AG04450 (cell line): ENCODE measurements at regions of chr19 and their contacts with region 1.

Region 1: DNA sequence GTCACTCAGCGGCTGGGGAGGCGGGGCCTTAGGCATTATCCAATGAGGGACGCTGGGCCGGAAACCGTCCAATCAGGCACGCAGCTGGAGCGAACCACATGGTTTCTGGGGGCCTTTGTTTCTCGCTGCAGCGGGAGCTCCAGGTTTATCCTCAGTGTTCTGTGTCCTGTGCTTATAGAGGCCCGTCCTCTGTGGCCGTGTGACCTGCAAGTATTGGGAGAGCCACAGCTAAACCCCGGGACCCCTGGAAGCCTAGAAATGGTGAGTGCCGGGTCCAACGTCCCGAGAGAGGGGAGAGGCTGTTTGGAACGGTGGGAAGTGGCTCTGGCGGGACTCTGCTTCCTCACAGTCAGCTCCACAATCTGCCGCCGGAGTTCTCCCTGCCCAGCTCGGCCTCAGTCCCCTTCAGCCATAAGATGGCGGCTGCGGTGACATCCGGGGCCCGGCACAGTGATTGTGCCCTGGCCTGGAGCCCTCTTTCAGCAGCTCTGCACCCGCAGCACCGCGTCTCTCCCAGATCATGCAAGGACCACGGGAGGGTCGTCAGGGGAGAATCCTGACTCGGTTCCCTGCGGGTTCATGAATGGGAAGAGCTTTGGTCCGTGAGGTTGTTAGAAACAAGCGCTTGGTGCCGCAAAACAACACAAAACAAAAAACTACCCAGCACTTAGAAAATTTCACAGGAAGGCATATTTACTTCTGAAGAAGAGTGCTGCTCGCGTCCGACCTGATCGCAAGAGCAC is at the start of gene ZNF253:
- DNase-seq: peak; percentile 65
- H3K4me3 ChIP-seq: peak within 1 kb of the TSS; percentile 83
- H3K27ac ChIP-seq: peak within 1 kb of the TSS; percentile 92
- H3K27me3 ChIP-seq: no peaks in the 10 kb centered on the region
- CTCF ChIP-seq: no peak
- polyA plus RNA-seq, gene ZNF253: 2.8 and 4.2 TPM in 2 replicates

Region 2: GRCh38 chr19:19776041-19777008 is 89.6 kb before region 1 on chr19:
- CTCF ChIA-PET with region 1: no interaction called
- POLR2A ChIA-PET with region 1: interaction called, 10 read pairs
- DNase-seq: peak; percentile 97
- H3K4me3 ChIP-seq: peak overlapping the region; percentile 95
- H3K27ac ChIP-seq: peak overlapping the region; percentile 47
- H3K27me3 ChIP-seq: no peaks in the 10 kb centered on the region
- CTCF ChIP-seq: no peak

Region 3: GRCh38 chr19:19821366-19821951 is 44.5 kb before region 1 on chr19 and contains the start of gene ZNF506:
- CTCF ChIA-PET with region 1: no interaction called
- POLR2A ChIA-PET with region 1: interaction called, 20 read pairs
- DNase-seq: peak; percentile 91
- H3K4me3 ChIP-seq: peak within 1 kb of the TSS; percentile 82
- H3K27ac ChIP-seq: peak within 1 kb of the TSS; percentile 99
- H3K27me3 ChIP-seq: no peaks in the 10 kb centered on the region
- CTCF ChIP-seq: no peak
- polyA plus RNA-seq, gene ZNF506: 10.4 and 14.2 TPM in 2 replicates

Region 4: DNA sequence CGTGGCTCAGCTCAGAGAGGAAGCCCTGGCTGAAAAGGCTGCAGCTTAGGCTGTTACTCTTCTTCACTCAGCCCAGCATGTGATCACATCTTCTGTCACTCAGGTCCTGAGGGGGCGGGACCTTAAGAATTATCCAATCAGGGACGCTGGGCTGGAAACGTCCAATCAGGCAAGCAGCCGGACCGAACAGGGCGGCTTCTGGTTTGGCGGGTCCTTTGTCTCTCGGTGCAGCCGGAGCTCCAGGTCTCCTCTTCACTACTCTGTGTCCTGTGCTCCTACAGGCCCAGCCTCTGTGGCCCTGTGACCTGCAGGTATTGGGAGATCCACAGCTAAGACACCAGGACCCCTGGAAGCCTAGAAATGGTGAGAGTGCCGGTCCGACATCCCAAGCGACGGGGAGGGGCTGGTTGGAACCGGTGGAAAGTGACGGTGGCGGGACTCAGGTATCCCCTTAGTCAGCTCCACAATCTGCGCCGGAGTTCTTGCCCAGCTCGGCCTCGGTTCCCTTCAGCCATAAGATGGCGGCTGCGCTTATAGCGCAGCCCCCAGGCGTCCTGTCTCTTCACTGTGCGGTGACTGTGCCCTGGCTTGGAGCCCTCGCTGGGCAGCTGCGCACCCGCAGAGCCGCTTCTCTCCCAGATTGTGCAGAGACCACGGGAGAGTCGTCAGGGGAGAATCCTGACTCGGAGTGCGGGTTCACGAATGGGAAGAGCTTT is 35.0 kb after region 1 on chr19 and contains the start of gene ZNF93:
- CTCF ChIA-PET with region 1: no interaction called
- POLR2A ChIA-PET with region 1: interaction called, 18 read pairs
- DNase-seq: peak; percentile 93
- H3K4me3 ChIP-seq: peak within 1 kb of the TSS; percentile 82
- H3K27ac ChIP-seq: peak within 1 kb of the TSS; percentile 97
- H3K27me3 ChIP-seq: no peaks in the 10 kb centered on the region
- CTCF ChIP-seq: no peak
- polyA plus RNA-seq, gene ZNF93: 4.6 and 4.9 TPM in 2 replicates